ENCODE measurements at regions of chr22 and their contacts with region 1.

Region 1: DNA sequence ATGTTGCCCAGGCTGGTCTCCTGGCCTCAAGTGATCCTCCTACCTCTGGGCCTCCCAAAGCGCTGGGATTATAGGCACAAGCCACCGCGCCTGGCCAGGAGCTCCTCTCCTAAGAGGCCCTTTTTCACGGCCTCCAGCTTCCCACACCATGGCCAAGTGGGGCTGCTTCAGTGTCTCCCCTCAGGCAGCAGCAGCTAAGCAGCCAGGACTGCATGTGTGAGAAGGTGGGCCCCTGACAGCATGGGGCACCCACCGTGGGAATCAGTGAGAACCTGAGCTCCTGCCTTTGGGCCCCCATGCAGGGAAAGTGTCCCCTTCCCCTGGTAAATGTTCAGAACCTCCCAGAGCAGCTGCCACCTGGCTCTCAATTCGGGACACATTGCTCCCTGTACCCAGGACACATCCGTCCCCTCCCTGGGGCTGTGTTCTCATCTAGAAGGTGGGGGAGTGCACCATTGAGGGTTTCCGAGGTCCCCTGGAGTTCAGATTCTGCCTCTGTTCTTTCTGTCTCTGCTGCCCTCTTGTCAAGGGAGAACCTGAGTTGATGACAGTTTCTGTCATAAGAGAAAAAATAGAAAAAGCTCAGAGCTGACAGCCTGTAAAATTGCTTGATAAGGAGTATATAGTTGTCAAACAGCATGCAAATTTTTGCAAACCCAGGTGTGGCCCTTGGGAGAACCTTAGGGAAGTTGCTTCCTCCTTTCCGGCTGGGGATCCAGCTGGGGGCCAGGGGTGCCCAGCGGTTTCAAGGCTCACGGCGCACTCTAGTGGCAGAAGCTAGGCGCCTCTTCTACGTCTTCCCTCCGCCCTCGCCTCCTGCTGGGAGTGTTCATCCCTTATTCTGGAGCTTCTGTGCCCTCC is 29.7 kb downstream of the FAM83F start:
- DNase-seq: peak; percentile 76
- H3K4me3 Mint-ChIP-seq: no peak overlapping the region
- H3K27ac Mint-ChIP-seq: no peak overlapping the region
- H3K4me1 Mint-ChIP-seq: no peaks in the 10 kb centered on the region
- H3K27me3 Mint-ChIP-seq: no peaks in the 10 kb centered on the region

Region 2: GRCh38 chr22:39559454-39560105 is 464.9 kb before region 1 on chr22:
- CTCF ChIA-PET with region 1: interaction called, 37 read pairs
- POLR2A ChIA-PET with region 1: no interaction called
- intact Hi-C with region 1: no loop called
- DNase-seq: no peak
- H3K4me3 Mint-ChIP-seq: no peak overlapping the region
- H3K27ac Mint-ChIP-seq: no peak overlapping the region
- H3K4me1 Mint-ChIP-seq: peaks cover 7% of the 10 kb centered on the region
- H3K27me3 Mint-ChIP-seq: peaks cover 20% of the 10 kb centered on the region

Region 3: GRCh38 chr22:39893526-39893925 is 130.9 kb before region 1 on chr22 and contains the start of gene ENTHD1:
- CTCF ChIA-PET with region 1: interaction called, 10 read pairs
- POLR2A ChIA-PET with region 1: no interaction called
- intact Hi-C with region 1: no loop called
- DNase-seq: no peak
- H3K4me3 Mint-ChIP-seq: no peak within 1 kb of the TSS
- H3K27ac Mint-ChIP-seq: no peak within 1 kb of the TSS
- H3K4me1 Mint-ChIP-seq: peaks cover 12% of the 10 kb centered on the region
- H3K27me3 Mint-ChIP-seq: no peaks in the 10 kb centered on the region
- total RNA-seq, gene ENTHD1: 0.41 to 0.95 TPM

Region 4: DNA sequence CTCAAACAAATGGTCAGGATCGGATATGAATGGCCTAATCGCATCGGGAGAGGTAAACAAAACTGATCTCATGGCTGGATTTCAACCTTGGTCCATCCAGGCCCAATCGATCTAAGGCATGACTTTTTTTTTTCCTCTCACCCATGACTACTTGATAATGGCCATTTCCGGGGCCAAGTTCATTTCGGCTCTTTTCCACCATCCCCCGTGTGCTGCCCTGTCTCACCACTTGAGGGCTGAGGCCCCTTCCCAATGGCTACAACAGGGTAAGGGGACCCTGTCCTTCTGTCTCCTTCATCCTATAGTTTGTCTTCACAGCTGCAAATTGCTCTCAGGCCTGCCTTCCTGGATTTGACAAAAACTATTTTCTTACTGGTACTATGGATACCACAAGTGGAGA is 96.9 kb before region 1 on chr22:
- CTCF ChIA-PET with region 1: interaction called, 19 read pairs
- POLR2A ChIA-PET with region 1: no interaction called
- intact Hi-C with region 1: no loop called
- DNase-seq: peak; percentile 62
- H3K4me3 Mint-ChIP-seq: no peak overlapping the region
- H3K27ac Mint-ChIP-seq: no peak overlapping the region
- H3K4me1 Mint-ChIP-seq: peaks cover 44% of the 10 kb centered on the region
- H3K27me3 Mint-ChIP-seq: no peaks in the 10 kb centered on the region

Region 5: GRCh38 chr22:39946503-39947219 is 77.8 kb before region 1 on chr22:
- CTCF ChIA-PET with region 1: interaction called, 25 read pairs
- POLR2A ChIA-PET with region 1: no interaction called
- intact Hi-C with region 1: no loop called
- DNase-seq: no peak
- H3K4me3 Mint-ChIP-seq: peak overlapping the region; percentile 51
- H3K27ac Mint-ChIP-seq: peak overlapping the region; percentile 86
- H3K4me1 Mint-ChIP-seq: peaks cover 93% of the 10 kb centered on the region
- H3K27me3 Mint-ChIP-seq: no peaks in the 10 kb centered on the region

Region 6: GRCh38 chr22:40009953-40010671 is 14.3 kb before region 1 on chr22:
- CTCF ChIA-PET with region 1: interaction called, 16 read pairs
- POLR2A ChIA-PET with region 1: no interaction called
- intact Hi-C with region 1: no loop called
- DNase-seq: peak; percentile 45
- H3K4me3 Mint-ChIP-seq: peak overlapping the region; percentile 18
- H3K27ac Mint-ChIP-seq: no peak overlapping the region
- H3K4me1 Mint-ChIP-seq: peaks cover 13% of the 10 kb centered on the region
- H3K27me3 Mint-ChIP-seq: peaks cover 25% of the 10 kb centered on the region

Region 7: GRCh38 chr22:40094485-40094884 is 70.1 kb after region 1 on chr22:
- CTCF ChIA-PET with region 1: no interaction called
- POLR2A ChIA-PET with region 1: no interaction called
- intact Hi-C with region 1: no loop called
- DNase-seq: no peak
- H3K4me3 Mint-ChIP-seq: peak overlapping the region; percentile 65
- H3K27ac Mint-ChIP-seq: peak overlapping the region; percentile 80
- H3K4me1 Mint-ChIP-seq: peaks cover 64% of the 10 kb centered on the region
- H3K27me3 Mint-ChIP-seq: no peaks in the 10 kb centered on the region

Region 8: DNA sequence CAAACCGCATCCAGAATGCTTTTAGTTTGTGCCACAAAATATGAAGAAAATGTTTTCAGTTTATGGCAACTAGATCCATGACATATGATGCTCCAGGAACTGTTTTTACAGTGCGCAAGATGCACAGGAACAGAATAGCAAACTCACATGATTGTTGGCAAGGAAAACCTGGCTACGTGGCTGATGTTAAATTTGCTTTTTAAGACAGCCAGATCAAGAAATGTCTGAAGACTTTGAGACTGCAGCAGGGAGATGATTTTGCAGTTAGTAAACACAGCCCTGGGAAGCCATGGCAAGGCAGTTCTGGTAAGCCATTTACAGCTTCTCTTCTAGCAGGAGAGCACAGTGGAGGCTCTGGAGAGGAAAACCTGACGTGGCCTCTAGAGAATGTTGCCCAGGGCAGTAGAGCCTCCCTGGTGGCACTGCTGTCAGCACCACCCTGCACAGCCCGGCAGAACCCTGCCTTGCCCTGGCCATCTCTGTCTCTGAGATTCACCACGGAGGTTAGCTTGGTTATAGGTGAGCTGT is 83.5 kb after region 1 on chr22:
- CTCF ChIA-PET with region 1: no interaction called
- POLR2A ChIA-PET with region 1: no interaction called
- intact Hi-C with region 1: no loop called
- DNase-seq: peak; percentile 55
- H3K4me3 Mint-ChIP-seq: peak overlapping the region; percentile 58
- H3K27ac Mint-ChIP-seq: peak overlapping the region; percentile 74
- H3K4me1 Mint-ChIP-seq: peaks cover 81% of the 10 kb centered on the region
- H3K27me3 Mint-ChIP-seq: no peaks in the 10 kb centered on the region

Region 9: GRCh38 chr22:40346178-40347118 is 322.0 kb after region 1 on chr22 and contains the start of gene ADSL:
- CTCF ChIA-PET with region 1: interaction called, 25 read pairs
- POLR2A ChIA-PET with region 1: no interaction called
- intact Hi-C with region 1: no loop called
- DNase-seq: peak; percentile 91
- H3K4me3 Mint-ChIP-seq: peak within 1 kb of the TSS; percentile 99
- H3K27ac Mint-ChIP-seq: peak within 1 kb of the TSS; percentile 100
- H3K4me1 Mint-ChIP-seq: peaks cover 49% of the 10 kb centered on the region
- H3K27me3 Mint-ChIP-seq: no peaks in the 10 kb centered on the region
- total RNA-seq, gene ADSL: 143 to 146 TPM

Region 10: DNA sequence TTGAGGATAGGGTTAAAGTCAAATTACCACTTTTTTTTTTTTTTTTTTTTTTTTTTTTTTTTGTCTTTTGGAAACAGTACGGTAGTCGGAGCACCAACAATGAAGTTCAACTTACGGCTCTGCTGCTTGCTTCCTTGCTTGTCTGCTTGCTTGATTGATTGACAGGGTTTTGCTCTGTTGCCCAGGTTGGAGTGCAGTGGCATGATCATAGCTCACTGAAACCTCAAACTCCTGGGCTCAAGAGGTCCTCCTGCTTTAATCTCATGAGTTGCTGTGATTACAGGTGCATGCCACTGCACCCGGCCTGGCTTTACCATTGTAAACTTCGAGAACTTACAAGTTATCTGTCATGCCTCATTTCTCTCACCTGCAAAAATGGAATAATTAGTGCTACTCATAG is 351.7 kb after region 1 on chr22:
- CTCF ChIA-PET with region 1: no interaction called
- POLR2A ChIA-PET with region 1: no interaction called
- intact Hi-C with region 1: no loop called
- DNase-seq: no peak
- H3K4me3 Mint-ChIP-seq: no peak overlapping the region
- H3K27ac Mint-ChIP-seq: no peak overlapping the region
- H3K4me1 Mint-ChIP-seq: peaks cover 26% of the 10 kb centered on the region
- H3K27me3 Mint-ChIP-seq: no peaks in the 10 kb centered on the region